CD8-positive, alpha-beta T cell (primary cell): ENCODE measurements at regions of chr1 and their contacts with region 1.

Region 1: DNA sequence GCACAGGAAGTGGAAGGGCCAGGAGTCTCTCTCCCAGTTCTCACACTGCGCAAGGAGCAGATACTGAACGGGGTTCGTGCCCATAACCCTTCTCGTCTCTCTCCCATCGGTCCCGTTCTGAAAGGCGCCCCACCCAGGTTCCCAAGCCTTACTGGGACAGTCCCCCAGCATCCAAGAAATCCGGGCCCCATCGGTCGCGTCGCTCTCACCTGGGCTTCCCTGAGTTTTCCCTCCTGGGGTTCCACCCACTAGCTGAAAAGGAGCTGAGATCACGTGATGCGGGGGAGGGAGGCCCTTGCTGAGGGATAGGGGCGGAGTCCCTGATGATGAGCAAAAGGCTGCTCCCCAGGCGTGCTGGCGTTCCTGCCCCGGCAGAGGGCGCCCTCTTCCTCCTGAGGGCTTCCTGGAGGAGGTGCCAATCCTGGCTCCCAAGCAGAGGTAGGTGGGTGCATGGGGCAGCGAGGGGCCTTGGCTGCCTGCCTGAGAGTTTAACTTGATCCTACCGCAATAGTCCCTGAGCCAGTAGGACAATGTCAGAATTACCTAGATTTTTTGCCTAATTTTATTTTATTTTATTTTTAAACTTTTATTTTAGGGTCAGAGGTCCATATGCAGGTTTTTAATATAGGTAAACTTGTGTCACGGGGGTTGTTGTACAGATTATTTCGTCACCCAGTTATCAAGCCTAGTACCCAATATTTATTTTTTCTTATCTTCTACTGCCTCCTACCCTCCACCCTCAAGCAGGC is at the start of gene SPOCD1:
- DNase-seq: peak; percentile 66 to 91 (median 83)
- ATAC-seq: peak; percentile 97
- H3K4me3 ChIP-seq: no peak within 1 kb of the TSS
- H3K4me3 Mint-ChIP-seq: no peak within 1 kb of the TSS
- H3K27ac ChIP-seq: peak within 1 kb of the TSS in 1 of 2 experiments; percentile 12
- H3K27ac Mint-ChIP-seq: no peak within 1 kb of the TSS
- H3K4me1 ChIP-seq: no peaks in the 10 kb centered on the region
- H3K4me1 Mint-ChIP-seq: peaks cover 17% of the 10 kb centered on the region
- H3K27me3 ChIP-seq: no peaks in the 10 kb centered on the region
- H3K27me3 Mint-ChIP-seq: no peaks in the 10 kb centered on the region
- CTCF ChIP-seq: peak; percentile 72
- total RNA-seq, gene SPOCD1: not detected

Region 2: DNA sequence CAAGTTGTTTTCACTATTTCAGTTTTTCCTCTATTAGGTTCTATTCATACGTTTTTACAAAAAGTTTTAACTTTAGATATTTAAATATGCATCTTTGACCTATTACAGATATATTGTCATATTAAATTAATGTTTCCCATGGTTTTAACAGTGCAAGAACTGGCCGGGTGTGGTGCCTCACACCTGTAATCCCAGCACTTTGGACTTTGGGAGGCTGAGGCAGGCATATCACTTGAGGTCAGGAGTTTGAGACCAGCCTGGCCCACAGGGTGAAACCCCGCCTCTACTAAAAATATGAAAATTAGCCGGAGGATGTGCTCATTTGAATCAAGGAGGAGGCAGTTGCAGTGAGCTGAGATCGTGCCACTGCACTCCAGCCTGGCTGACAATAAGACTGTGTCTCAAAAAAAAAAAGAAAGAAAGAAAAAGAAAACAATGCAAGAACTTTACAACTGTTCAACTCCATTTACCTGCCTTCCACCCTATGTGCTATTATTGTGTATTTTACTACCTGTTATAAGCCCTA is 259.4 kb before region 1 on chr1:
- CTCF ChIA-PET with region 1: no interaction called
- POLR2A ChIA-PET with region 1: no interaction called
- intact Hi-C with region 1: no loop called
- DNase-seq: no peak
- ATAC-seq: no peak
- H3K4me3 ChIP-seq: no peak overlapping the region
- H3K4me3 Mint-ChIP-seq: no peak overlapping the region
- H3K27ac ChIP-seq: no peak overlapping the region
- H3K27ac Mint-ChIP-seq: no peak overlapping the region
- H3K4me1 ChIP-seq: no peaks in the 10 kb centered on the region
- H3K4me1 Mint-ChIP-seq: no peaks in the 10 kb centered on the region
- H3K27me3 ChIP-seq: peaks cover 0 to 2% of the 10 kb centered on the region in 2 experiments
- H3K27me3 Mint-ChIP-seq: peaks cover 25% of the 10 kb centered on the region
- CTCF ChIP-seq: no peak

Region 3: GRCh38 chr1:31781756-31782371 is 34.1 kb before region 1 on chr1:
- CTCF ChIA-PET with region 1: no interaction called
- POLR2A ChIA-PET with region 1: no interaction called
- intact Hi-C with region 1: no loop called
- DNase-seq: no peak
- ATAC-seq: no peak
- H3K4me3 ChIP-seq: no peak overlapping the region
- H3K4me3 Mint-ChIP-seq: no peak overlapping the region
- H3K27ac ChIP-seq: no peak overlapping the region
- H3K27ac Mint-ChIP-seq: no peak overlapping the region
- H3K4me1 ChIP-seq: no peaks in the 10 kb centered on the region
- H3K4me1 Mint-ChIP-seq: no peaks in the 10 kb centered on the region
- H3K27me3 ChIP-seq: no peaks in the 10 kb centered on the region
- H3K27me3 Mint-ChIP-seq: peaks cover 11% of the 10 kb centered on the region
- CTCF ChIP-seq: no peak

Region 4: DNA sequence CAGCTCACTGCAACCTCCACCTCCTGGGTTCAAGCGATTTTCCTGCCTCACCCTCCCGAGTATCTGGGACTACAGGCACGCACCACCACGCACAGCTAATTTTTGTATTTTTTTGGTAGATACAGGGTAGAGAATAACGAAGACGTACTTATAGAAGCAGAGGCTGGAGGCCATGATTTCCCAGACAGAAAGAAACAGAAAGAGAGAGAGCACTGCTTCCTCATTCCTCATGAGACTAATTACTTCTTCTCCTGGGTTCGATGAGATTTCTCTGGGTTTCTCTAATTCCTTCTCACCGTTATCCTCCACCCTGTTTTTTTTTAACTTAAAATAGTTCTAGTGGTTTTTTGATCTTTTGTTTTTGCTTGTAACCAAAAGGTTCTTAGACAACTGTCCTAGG is 145.6 kb after region 1 on chr1:
- CTCF ChIA-PET with region 1: interaction called, 77 read pairs
- POLR2A ChIA-PET with region 1: no interaction called
- intact Hi-C with region 1: loop called (anchors 1 kb)
- DNase-seq: no peak
- ATAC-seq: no peak
- H3K4me3 ChIP-seq: no peak overlapping the region
- H3K4me3 Mint-ChIP-seq: no peak overlapping the region
- H3K27ac ChIP-seq: no peak overlapping the region
- H3K27ac Mint-ChIP-seq: no peak overlapping the region
- H3K4me1 ChIP-seq: peaks cover 27% of the 10 kb centered on the region
- H3K4me1 Mint-ChIP-seq: peaks cover 35% of the 10 kb centered on the region
- H3K27me3 ChIP-seq: no peaks in the 10 kb centered on the region
- H3K27me3 Mint-ChIP-seq: no peaks in the 10 kb centered on the region
- CTCF ChIP-seq: no peak